Ascending aorta (tissue), 2 donors: ENCODE measurements at regions of chr7 and their contacts with region 1.

Region 1: DNA sequence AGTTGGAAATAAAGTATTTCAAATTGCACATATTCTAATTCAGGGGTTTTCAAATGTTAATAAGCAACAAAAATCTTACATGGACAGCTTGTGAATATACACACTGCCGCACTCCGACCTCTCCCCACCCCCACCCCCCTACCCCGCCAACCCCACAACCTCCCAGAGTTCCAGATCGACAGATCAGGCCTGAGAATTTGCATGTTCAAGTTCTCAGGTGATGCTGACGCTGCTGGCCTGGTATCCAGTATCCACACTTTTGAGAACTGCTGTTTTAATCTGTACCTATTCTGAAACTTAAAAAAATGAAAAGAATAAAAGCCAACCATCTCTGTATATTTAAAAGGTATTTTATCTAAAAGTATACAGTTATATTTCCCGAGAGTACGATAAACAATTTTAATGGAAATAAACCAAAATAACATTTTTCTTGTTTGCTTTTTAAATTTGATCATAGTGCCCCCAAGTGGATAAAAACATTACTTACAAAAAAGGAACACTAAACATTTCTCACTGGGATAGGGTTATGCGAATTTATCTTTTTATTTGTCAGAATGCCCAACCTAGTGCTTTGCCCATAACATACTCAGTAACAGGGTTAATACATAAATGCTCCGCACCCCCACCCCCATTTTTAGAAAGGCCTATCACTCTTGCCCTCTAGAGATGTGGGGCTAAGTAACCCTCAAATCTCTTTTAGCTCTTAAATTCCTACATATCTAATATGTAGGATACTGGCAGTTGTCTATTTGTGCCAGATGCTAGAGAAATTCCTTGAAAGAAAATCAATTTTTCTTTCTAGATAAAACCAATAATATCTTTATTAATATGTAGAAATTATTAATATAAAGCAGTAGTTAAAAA is 166.3 kb downstream of the RNF133 start:
- DNase-seq: no peak
- H3K4me3 ChIP-seq: no peak overlapping the region
- H3K27ac ChIP-seq: no peak overlapping the region
- H3K4me1 ChIP-seq: no peaks in the 10 kb centered on the region
- H3K27me3 ChIP-seq: no peaks in the 10 kb centered on the region
- CTCF ChIP-seq: peak in 1 of 3 experiments; percentile 40

Region 2: DNA sequence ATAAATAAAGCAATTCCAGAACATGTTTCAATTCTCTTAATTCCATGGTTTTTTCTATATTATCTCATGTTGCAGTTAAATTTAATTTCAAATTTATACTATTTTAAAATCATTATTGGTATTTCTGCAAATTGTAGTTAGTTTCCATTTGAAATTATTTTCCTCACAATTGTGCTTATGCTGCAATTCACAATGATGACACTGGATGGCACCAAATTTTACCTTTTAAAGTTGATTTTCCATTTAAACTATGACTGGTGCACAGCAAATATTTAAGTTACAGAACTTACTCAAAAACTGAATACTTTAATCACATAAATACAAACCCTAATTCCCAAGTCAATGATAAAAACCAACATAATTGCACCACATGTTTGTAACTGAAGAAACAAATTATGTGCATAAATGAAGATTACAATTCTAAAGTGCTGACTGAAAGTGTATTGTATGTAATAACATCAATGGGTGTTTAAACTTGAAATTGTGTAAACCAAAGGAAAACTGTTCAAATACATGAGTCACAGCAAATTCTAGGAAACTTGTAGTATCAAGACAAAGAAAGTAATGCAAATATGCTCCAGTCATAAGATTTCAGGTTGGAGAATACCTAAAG is 313.3 kb before region 1 on chr7:
- intact Hi-C with region 1: loop called (anchors 5 kb)
- DNase-seq: no peak
- H3K4me3 ChIP-seq: no peak overlapping the region
- H3K27ac ChIP-seq: no peak overlapping the region
- H3K4me1 ChIP-seq: no peaks in the 10 kb centered on the region
- H3K27me3 ChIP-seq: no peaks in the 10 kb centered on the region
- CTCF ChIP-seq: peak; percentile 12 to 55 (median 47)

Region 3: GRCh38 chr7:122383934-122384333 is 148.7 kb before region 1 on chr7:
- intact Hi-C with region 1: no loop called
- DNase-seq: no peak
- H3K4me3 ChIP-seq: no peak overlapping the region
- H3K27ac ChIP-seq: no peak overlapping the region
- H3K4me1 ChIP-seq: no peaks in the 10 kb centered on the region
- H3K27me3 ChIP-seq: no peaks in the 10 kb centered on the region
- CTCF ChIP-seq: no peak

Region 4: DNA sequence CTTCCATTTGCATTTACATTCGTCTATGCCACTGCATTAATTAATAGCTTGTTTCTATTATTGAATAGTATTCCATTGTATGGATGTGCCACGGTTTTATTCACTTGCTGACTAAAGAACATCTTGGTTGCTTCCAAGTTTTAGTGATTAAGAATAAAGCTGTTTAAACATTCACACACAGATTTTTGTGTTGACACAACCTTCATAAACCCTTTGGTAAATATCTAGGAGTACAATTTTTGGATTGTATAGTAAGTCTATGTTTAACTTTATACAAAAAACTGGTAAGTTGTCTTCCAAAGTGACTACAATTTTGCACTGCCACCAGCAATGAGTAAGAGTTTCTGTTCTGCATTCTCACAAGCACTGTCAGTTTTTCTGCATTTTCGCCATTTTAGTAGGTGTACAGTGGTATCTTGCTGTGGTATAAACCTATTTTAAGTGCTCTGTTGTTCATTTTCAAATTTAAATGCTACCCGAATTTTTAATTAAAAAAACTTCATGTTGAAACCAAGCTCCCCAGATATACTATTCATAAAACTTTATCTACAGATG is 44.9 kb after region 1 on chr7:
- intact Hi-C with region 1: no loop called
- DNase-seq: no peak
- H3K4me3 ChIP-seq: no peak overlapping the region
- H3K27ac ChIP-seq: no peak overlapping the region
- H3K4me1 ChIP-seq: no peaks in the 10 kb centered on the region
- H3K27me3 ChIP-seq: no peaks in the 10 kb centered on the region
- CTCF ChIP-seq: no peak